Naive thymus-derived CD4-positive, alpha-beta T cell (primary cell): ENCODE measurements at regions of chrX and their contacts with region 1.

Region 1: GRCh38 chrX:13653022-13653693 is at the start of gene TCEANC:
- DNase-seq: peak; percentile 77 to 96 (median 93)
- ATAC-seq: peak; percentile 97
- H3K4me3 ChIP-seq: peak within 1 kb of the TSS; percentile 93
- H3K4me3 Mint-ChIP-seq: peak within 1 kb of the TSS; percentile 79 to 96 (median 93)
- H3K27ac ChIP-seq: peak within 1 kb of the TSS; percentile 93
- H3K27ac Mint-ChIP-seq: peak within 1 kb of the TSS; percentile 91 to 98 (median 96)
- H3K4me1 ChIP-seq: peaks cover 15 to 16% of the 10 kb centered on the region in 2 donors
- H3K4me1 Mint-ChIP-seq: peaks cover 0 to 39% (median 24%) of the 10 kb centered on the region in 7 donors
- H3K27me3 ChIP-seq: no peaks in the 10 kb centered on the region
- H3K27me3 Mint-ChIP-seq: no peaks in the 10 kb centered on the region
- total RNA-seq, gene TCEANC: 5.0 to 17.5 (median 11.4) TPM

Region 2: DNA sequence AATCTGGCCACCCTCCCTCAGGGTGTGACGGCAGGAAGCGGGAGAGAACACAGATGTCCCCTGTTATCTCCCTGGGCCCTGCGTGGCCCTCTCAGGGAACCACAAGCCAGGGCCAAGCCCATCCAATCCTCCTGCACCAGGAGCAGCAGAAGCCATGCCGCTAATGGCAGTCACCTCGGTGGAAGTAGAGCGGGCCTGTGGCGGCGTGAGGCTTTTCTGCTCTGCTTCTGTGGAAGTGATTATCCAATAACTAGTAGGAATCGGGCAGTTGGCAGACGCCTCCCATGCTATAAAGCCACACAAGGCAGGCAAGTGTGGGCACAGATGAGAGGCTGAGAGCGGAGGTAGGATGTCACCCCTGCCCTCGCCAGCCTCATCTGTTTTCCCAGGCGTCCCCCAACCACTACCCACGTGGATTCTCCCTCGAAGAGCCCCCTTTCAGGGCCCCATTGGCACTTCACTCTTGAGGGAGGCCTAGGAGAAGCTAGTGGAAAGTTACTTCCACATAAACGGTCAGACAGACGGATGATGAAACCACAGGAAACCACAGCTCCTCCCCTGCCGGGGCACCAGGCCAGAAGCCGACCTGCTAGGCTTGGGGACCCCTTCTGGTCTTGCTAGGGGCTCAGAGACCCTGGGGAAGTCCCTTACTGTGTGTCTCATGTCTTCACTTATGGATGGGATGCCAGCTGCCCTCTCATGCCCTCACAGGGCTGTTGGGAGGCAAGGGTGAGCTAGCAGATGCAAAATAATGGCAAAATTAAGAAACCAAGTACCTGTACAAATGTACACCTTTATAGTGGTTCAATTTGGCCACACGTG is 697.1 kb before region 1 on chrX:
- CTCF ChIA-PET with region 1: no interaction called
- POLR2A ChIA-PET with region 1: no interaction called
- intact Hi-C with region 1: loop called (anchors 2 to 5 kb)
- DNase-seq: peak in 3 of 9 donors; percentile 43 to 73 (median 65)
- ATAC-seq: peak; percentile 58
- H3K4me3 ChIP-seq: peak overlapping the region; percentile 66
- H3K4me3 Mint-ChIP-seq: peak overlapping the region; percentile 77 to 94 (median 88)
- H3K27ac ChIP-seq: peak overlapping the region; percentile 83
- H3K27ac Mint-ChIP-seq: peak overlapping the region; percentile 96 to 99 (median 97)
- H3K4me1 ChIP-seq: peaks cover 68 to 72% of the 10 kb centered on the region in 2 donors
- H3K4me1 Mint-ChIP-seq: peaks cover 20 to 90% (median 71%) of the 10 kb centered on the region in 7 donors
- H3K27me3 ChIP-seq: no peaks in the 10 kb centered on the region
- H3K27me3 Mint-ChIP-seq: no peaks in the 10 kb centered on the region

Region 3: DNA sequence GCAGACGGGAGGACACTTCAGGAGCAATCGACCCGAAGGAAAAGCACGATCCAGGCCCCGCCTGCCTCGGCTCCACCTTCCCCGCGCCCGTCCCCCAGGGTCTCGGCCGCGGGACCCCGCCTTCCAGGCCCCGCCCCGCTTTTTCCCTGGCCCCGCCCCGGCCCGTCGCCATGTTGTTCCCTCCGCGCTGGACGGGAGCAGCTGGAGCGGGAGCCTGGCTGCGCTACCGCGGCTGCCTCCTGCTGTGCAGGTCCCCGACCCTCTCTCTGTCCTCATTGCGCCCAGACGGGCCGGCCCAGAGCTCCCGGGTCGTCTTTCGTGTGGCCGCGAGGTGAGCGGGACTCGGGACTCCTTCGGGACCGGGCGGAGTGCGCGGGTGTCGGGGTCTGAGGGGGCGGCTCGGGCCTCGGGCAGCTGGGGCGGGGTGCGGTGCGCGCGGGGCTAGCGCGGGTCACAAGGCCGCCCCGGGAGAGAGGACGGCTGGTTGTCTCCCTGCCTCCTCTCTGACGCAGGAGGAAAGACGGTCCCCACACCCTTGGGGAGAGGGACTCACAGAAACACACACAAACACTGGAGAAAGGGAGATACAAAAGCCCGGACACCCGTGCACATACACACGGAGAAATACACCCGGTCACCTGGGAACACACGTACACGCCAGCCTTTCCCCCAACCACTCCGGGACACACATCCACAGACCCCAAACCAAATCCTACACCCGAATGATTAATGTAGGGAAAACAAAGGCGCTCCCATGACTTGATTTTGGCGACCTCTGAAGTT is 36.0 kb after region 1 on chrX and contains the start of gene RAB9A:
- CTCF ChIA-PET with region 1: no interaction called
- POLR2A ChIA-PET with region 1: interaction called, 8 read pairs
- intact Hi-C with region 1: loop called (anchors 1 kb)
- DNase-seq: peak; percentile 62 to 85 (median 76)
- ATAC-seq: peak; percentile 96
- H3K4me3 ChIP-seq: peak within 1 kb of the TSS; percentile 72
- H3K4me3 Mint-ChIP-seq: peak within 1 kb of the TSS; percentile 79 to 96 (median 92)
- H3K27ac ChIP-seq: peak within 1 kb of the TSS; percentile 84
- H3K27ac Mint-ChIP-seq: peak within 1 kb of the TSS; percentile 86 to 98 (median 95)
- H3K4me1 ChIP-seq: peaks cover 14 to 20% of the 10 kb centered on the region in 2 donors
- H3K4me1 Mint-ChIP-seq: peaks cover 25 to 55% (median 40%) of the 10 kb centered on the region in 7 donors
- H3K27me3 ChIP-seq: no peaks in the 10 kb centered on the region
- H3K27me3 Mint-ChIP-seq: no peaks in the 10 kb centered on the region
- total RNA-seq, gene RAB9A: 10.1 to 22.8 (median 18.3) TPM

Region 4: GRCh38 chrX:14497184-14497666 is 844.1 kb after region 1 on chrX:
- CTCF ChIA-PET with region 1: no interaction called
- POLR2A ChIA-PET with region 1: no interaction called
- intact Hi-C with region 1: loop called in 1 of 2 experiments (anchors 10 kb)
- DNase-seq: peak in 5 of 9 donors; percentile 3 to 29 (median 24)
- ATAC-seq: peak; percentile 37
- H3K4me3 ChIP-seq: peak overlapping the region; percentile 55
- H3K4me3 Mint-ChIP-seq: peak overlapping the region; percentile 34 to 89 (median 84)
- H3K27ac ChIP-seq: peak overlapping the region; percentile 49
- H3K27ac Mint-ChIP-seq: peak overlapping the region; percentile 82 to 96 (median 89)
- H3K4me1 ChIP-seq: no peaks in the 10 kb centered on the region
- H3K4me1 Mint-ChIP-seq: peaks cover 5 to 24% (median 21%) of the 10 kb centered on the region in 7 donors
- H3K27me3 ChIP-seq: no peaks in the 10 kb centered on the region
- H3K27me3 Mint-ChIP-seq: peaks cover 0 to 2% (median 0%) of the 10 kb centered on the region in 5 donors